Vagina (tissue), 2 donors: ENCODE measurements at regions of chr9 and their contacts with region 1.

Region 1: GRCh38 chr9:68999393-69000105 is 14.4 kb downstream of the PRKACG start:
- DNase-seq: no peak
- H3K4me3 ChIP-seq: no peak overlapping the region
- H3K27ac ChIP-seq: no peak overlapping the region
- H3K4me1 ChIP-seq: no peaks in the 10 kb centered on the region
- H3K27me3 ChIP-seq: no peaks in the 10 kb centered on the region
- CTCF ChIP-seq: peak; percentile 42 to 55 (median 54)
- POLR2A ChIP-seq: no peak

Region 2: GRCh38 chr9:68584189-68585033 is 415.1 kb before region 1 on chr9:
- intact Hi-C with region 1: loop called (anchors 10 kb)
- DNase-seq: no peak
- H3K4me3 ChIP-seq: no peak overlapping the region
- H3K27ac ChIP-seq: no peak overlapping the region
- H3K4me1 ChIP-seq: no peaks in the 10 kb centered on the region
- H3K27me3 ChIP-seq: no peaks in the 10 kb centered on the region
- CTCF ChIP-seq: peak; percentile 91 to 97 (median 91)
- POLR2A ChIP-seq: no peak

Region 3: GRCh38 chr9:68949271-68950000 is 50.1 kb before region 1 on chr9:
- intact Hi-C with region 1: no loop called
- DNase-seq: no peak
- H3K4me3 ChIP-seq: no peak overlapping the region
- H3K27ac ChIP-seq: no peak overlapping the region
- H3K4me1 ChIP-seq: no peaks in the 10 kb centered on the region
- H3K27me3 ChIP-seq: no peaks in the 10 kb centered on the region
- CTCF ChIP-seq: no peak
- POLR2A ChIP-seq: no peak

Region 4: GRCh38 chr9:69035438-69036308 is 36.1 kb after region 1 on chr9 and contains the start of gene FXN:
- intact Hi-C with region 1: no loop called
- DNase-seq: no peak
- H3K4me3 ChIP-seq: peak within 1 kb of the TSS; percentile 58 to 66
- H3K27ac ChIP-seq: peak within 1 kb of the TSS; percentile 75
- H3K4me1 ChIP-seq: peaks cover 11% of the 10 kb centered on the region
- H3K27me3 ChIP-seq: no peaks in the 10 kb centered on the region
- CTCF ChIP-seq: peak; percentile 60 to 96 (median 92)
- POLR2A ChIP-seq: peak in 1 of 2 donors; percentile 7
- total RNA-seq, gene FXN: 11.8 TPM

Region 5: DNA sequence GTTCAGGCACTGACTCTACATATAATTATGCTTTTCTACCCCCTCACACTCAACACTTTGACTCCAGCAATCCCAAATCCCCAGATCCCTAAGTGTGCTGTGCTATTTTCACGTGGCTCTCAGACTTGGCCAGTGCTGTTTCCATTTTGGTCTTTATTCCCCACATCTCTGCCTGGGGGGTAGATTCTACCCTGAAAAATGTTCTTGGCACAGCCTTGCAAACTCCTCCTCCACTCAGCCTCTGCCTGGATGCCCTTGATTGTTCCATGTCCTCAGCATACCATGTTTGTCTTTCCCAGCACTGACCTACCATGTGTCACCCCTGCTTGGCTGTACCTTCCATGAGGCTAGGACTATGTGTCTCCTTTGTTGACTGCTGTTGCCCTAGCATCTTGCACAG is 79.0 kb after region 1 on chr9:
- intact Hi-C with region 1: no loop called
- DNase-seq: peak in 1 of 2 donors; percentile 94
- H3K4me3 ChIP-seq: no peak overlapping the region
- H3K27ac ChIP-seq: no peak overlapping the region
- H3K4me1 ChIP-seq: peaks cover 6% of the 10 kb centered on the region
- H3K27me3 ChIP-seq: no peaks in the 10 kb centered on the region
- CTCF ChIP-seq: no peak
- POLR2A ChIP-seq: no peak

Region 6: GRCh38 chr9:69131682-69132081 is 132.1 kb after region 1 on chr9:
- intact Hi-C with region 1: no loop called
- DNase-seq: peak in 1 of 2 donors; percentile 61
- H3K4me3 ChIP-seq: no peak overlapping the region
- H3K27ac ChIP-seq: peak overlapping the region; percentile 20
- H3K4me1 ChIP-seq: peaks cover 18% of the 10 kb centered on the region
- H3K27me3 ChIP-seq: no peaks in the 10 kb centered on the region
- CTCF ChIP-seq: no peak
- POLR2A ChIP-seq: no peak